ENCODE measurements at regions of chr6 and their contacts with region 1.

Region 1: DNA sequence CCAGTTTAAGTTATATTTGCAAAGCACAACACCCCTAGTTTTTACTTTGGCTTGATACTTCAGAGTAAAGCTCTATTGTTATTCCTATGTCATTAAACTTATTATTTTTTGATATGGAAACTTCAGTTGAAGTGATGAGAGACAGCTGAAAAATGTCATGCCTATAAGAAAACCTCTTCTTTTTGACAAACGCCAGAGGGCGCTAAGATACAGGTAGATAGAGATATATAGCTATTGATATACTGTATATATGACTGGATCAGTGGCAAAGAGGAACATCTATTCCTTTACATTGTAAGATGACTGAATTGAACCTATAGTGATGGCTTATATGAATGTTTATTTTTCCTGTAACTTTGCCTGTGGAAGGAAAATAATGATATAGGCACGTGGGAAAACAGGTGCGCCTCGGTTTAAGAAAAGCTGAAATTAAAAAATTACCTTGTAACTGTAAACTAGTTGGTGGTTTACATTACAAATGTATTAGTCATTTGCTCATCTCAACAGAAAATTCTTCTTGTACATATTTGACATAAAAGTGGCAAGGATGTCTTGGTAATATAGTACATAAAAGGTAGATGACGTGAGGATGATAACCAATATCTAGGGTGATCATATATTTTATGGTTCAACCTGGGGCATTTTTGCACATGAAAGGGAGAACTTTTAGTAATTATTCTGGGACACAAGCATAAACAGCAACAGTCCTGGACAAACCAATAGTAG is 74.1 kb downstream of the LAMA4 start:
- DNase-seq: no peak
- ATAC-seq: peak; percentile 94
- H3K4me3 ChIP-seq: no peak overlapping the region
- H3K27ac ChIP-seq: no peak overlapping the region
- H3K4me1 ChIP-seq: no peaks in the 10 kb centered on the region
- H3K27me3 ChIP-seq: peaks cover 0 to 3% of the 10 kb centered on the region in 2 experiments; a peak in 2 of 4 replicates
- CTCF ChIP-seq: peak; percentile 48 to 74 (median 57); a peak in 5 of 6 replicates
- EP300 ChIP-seq: no peak
- POLR2A ChIP-seq: no peak
- RAD21 ChIP-seq: peak; percentile 80

Region 2: GRCh38 chr6:112196306-112196705 is 16.0 kb after region 1 on chr6:
- CTCF ChIA-PET with region 1: interaction called, 10 read pairs
- POLR2A ChIA-PET with region 1: no interaction called
- RAD21 ChIA-PET with region 1: interaction called, 5 read pairs
- SMC1A ChIA-PET with region 1: interaction called, 13 read pairs
- in situ Hi-C with region 1: no loop called
- intact Hi-C with region 1: no loop called
- DNase-seq: no peak
- ATAC-seq: no peak
- H3K4me3 ChIP-seq: no peak overlapping the region
- H3K27ac ChIP-seq: no peak overlapping the region
- H3K4me1 ChIP-seq: no peaks in the 10 kb centered on the region
- H3K27me3 ChIP-seq: 0 out of 4 replicates have a peak, but pooled peaks cover 0 to 3% of the 10 kb centered on the region in 2 experiments
- CTCF ChIP-seq: no peak
- EP300 ChIP-seq: no peak
- POLR2A ChIP-seq: no peak
- RAD21 ChIP-seq: no peak

Region 3: DNA sequence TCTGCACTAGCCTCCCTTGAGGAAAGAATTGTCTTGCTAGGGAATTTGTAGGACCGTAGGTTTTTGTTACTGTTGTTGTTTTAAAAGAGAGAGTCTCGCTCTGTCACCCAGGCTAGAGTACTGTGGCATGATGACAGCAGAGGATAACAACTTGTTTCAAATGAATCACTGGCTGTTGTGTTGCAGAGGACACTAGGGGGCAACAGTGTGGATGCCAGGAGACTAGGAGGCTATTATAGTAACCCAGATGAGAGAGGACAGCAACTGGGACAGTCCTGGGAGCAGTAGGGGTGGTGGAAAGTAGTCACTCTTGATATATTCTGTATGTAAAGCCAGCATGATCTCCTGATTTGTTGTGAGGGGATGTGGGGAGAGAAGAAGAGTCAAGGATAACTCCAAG is 115.9 kb after region 1 on chr6:
- CTCF ChIA-PET with region 1: interaction called, 10 read pairs
- POLR2A ChIA-PET with region 1: no interaction called
- RAD21 ChIA-PET with region 1: interaction called, 8 read pairs
- SMC1A ChIA-PET with region 1: interaction called, 8 read pairs
- in situ Hi-C with region 1: no loop called
- intact Hi-C with region 1: no loop called
- DNase-seq: no peak
- ATAC-seq: peak; percentile 83
- H3K4me3 ChIP-seq: no peak overlapping the region
- H3K27ac ChIP-seq: no peak overlapping the region
- H3K4me1 ChIP-seq: no peaks in the 10 kb centered on the region
- H3K27me3 ChIP-seq: peaks cover 0 to 2% of the 10 kb centered on the region in 2 experiments; a peak in 2 of 4 replicates
- CTCF ChIP-seq: peak; percentile 32 to 47 (median 34); a peak in 3 of 6 replicates
- EP300 ChIP-seq: no peak
- POLR2A ChIP-seq: no peak
- RAD21 ChIP-seq: peak; percentile 21; the same call in 1 of the 2 replicates

Region 4: DNA sequence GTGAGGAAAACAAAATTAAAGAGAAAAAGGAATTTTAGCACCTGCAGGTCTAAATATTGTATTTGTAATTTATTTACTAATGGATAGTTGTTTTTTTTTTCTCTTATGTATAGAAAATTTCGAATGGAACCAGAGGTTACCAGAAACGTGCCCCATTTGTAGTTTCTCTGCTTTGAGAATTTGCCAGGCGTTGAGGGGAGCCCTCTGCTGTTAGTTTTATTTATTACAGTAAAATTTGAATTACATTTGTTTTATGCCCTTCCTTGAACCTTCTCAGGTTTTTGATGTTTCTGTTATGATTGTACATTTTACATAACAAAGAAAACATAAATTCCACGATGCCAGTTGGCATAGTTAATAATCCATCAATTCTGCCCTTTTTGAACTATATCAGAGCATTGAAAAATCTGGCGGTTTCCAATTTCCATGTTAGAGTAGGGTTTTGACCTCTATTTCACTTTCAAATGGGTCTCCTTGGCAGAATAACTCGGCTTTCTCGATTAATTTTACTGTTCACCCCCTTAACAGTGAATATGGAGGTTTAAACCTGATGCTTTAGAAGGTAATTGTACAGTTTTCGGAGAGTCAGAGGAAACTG is 131.8 kb after region 1 on chr6:
- CTCF ChIA-PET with region 1: interaction called, 196 read pairs
- POLR2A ChIA-PET with region 1: interaction called, 4 read pairs
- RAD21 ChIA-PET with region 1: interaction called, 119 read pairs
- SMC1A ChIA-PET with region 1: interaction called, 118 read pairs
- in situ Hi-C with region 1: loop called (anchors 5 kb)
- intact Hi-C with region 1: loop called (anchors 1 kb)
- DNase-seq: no peak
- ATAC-seq: 0 out of 3 replicates have a peak, but pooled peaks have one; percentile 27
- H3K4me3 ChIP-seq: no peak overlapping the region
- H3K27ac ChIP-seq: no peak overlapping the region
- H3K4me1 ChIP-seq: peaks cover 6% of the 10 kb centered on the region
- H3K27me3 ChIP-seq: no peaks in the 10 kb centered on the region
- CTCF ChIP-seq: peak; percentile 54 to 69 (median 59)
- EP300 ChIP-seq: no peak
- POLR2A ChIP-seq: no peak
- RAD21 ChIP-seq: peak; percentile 84

Region 5: GRCh38 chr6:112372226-112372806 is 192.1 kb after region 1 on chr6:
- CTCF ChIA-PET with region 1: interaction called, 20 read pairs
- POLR2A ChIA-PET with region 1: no interaction called
- RAD21 ChIA-PET with region 1: interaction called, 8 read pairs
- SMC1A ChIA-PET with region 1: interaction called, 8 read pairs
- in situ Hi-C with region 1: no loop called
- intact Hi-C with region 1: loop called (anchors 2 kb)
- DNase-seq: no peak
- ATAC-seq: peak; percentile 73
- H3K4me3 ChIP-seq: no peak overlapping the region
- H3K27ac ChIP-seq: no peak overlapping the region
- H3K4me1 ChIP-seq: no peaks in the 10 kb centered on the region
- H3K27me3 ChIP-seq: no peaks in the 10 kb centered on the region
- CTCF ChIP-seq: peak; percentile 22 to 37 (median 25); a peak in 3 of 6 replicates
- EP300 ChIP-seq: no peak
- POLR2A ChIP-seq: no peak
- RAD21 ChIP-seq: peak; percentile 27; the same call in 1 of the 2 replicates